ENCODE measurements at regions of chr11 and their contacts with region 1.

Region 1: DNA sequence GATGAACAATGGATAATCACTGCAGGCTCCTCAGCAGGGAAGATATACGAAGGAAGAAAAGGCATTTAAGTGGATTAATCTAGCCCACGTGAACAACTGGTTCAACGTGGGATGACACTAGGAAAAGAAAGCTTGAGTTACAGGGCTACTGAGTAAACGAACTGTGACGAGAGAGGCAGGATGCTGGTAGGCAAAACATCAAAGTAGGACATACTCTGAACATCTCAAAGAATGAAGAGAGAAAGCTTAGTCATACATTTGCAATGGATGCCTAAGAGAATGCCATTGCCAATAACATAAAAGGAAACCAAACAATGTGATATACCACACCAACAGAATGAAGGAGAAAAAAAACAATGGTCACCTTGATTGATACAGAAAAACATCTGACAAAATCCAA is 12.9 kb downstream of the USP28 start:
- DNase-seq: no peak
- ATAC-seq: no peak
- H3K4me3 ChIP-seq: no peak overlapping the region
- H3K4me3 Mint-ChIP-seq: peak overlapping the region in 2 of 10 donors; percentile 0 to 27
- H3K27ac ChIP-seq: no peak overlapping the region
- H3K27ac Mint-ChIP-seq: peak overlapping the region in 3 of 9 donors; percentile 2 to 74 (median 7)
- H3K4me1 ChIP-seq: peaks cover 0 to 25% of the 10 kb centered on the region in 2 donors
- H3K4me1 Mint-ChIP-seq: peaks cover 11 to 49% (median 22%) of the 10 kb centered on the region in 7 donors
- H3K27me3 ChIP-seq: no peaks in the 10 kb centered on the region
- H3K27me3 Mint-ChIP-seq: no peaks in the 10 kb centered on the region

Region 2: GRCh38 chr11:113814181-113814580 is 48.3 kb before region 1 on chr11:
- CTCF ChIA-PET with region 1: no interaction called
- POLR2A ChIA-PET with region 1: no interaction called
- intact Hi-C with region 1: loop called in 1 of 2 experiments (anchors 5 kb)
- DNase-seq: no peak
- ATAC-seq: no peak
- H3K4me3 ChIP-seq: no peak overlapping the region
- H3K4me3 Mint-ChIP-seq: no peak overlapping the region
- H3K27ac ChIP-seq: no peak overlapping the region
- H3K27ac Mint-ChIP-seq: peak overlapping the region in 1 of 9 donors; percentile 43
- H3K4me1 ChIP-seq: no peaks in the 10 kb centered on the region
- H3K4me1 Mint-ChIP-seq: peaks cover 0 to 3% (median 0%) of the 10 kb centered on the region in 7 donors
- H3K27me3 ChIP-seq: no peaks in the 10 kb centered on the region
- H3K27me3 Mint-ChIP-seq: no peaks in the 10 kb centered on the region

Region 3: DNA sequence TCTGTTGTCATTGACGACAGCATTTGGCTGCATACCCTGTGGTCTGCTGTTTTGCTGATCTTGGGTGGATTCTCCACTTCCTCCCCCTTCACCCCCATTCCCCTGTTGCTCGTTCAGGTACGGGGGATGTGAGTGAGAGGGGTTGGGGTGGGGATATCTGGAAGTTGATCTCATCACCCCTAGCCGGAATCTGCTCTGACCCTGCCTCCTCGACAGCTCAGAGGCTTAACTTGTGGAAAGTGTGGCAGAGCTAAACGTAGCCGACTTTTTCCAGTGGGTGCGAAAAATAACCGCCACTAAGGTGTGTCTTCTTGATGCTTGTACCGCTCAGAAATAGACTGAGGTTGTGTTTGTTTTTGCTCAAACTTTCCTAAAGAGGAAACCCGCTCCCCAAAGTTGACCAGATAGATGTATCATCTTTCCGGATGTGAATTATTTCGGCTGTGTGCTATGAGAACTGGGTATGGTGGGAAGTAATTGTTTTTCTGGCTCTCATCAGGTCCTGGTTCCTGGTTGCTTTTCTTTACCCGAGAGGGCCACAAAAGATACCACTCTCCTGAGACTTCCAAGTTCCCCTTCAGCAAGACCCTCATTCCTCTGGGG is 203.7 kb after region 1 on chr11:
- CTCF ChIA-PET with region 1: no interaction called
- POLR2A ChIA-PET with region 1: no interaction called
- intact Hi-C with region 1: no loop called
- DNase-seq: no peak
- ATAC-seq: peak; percentile 57
- H3K4me3 ChIP-seq: no peak overlapping the region
- H3K4me3 Mint-ChIP-seq: peak overlapping the region in 1 of 10 donors; percentile 34
- H3K27ac ChIP-seq: no peak overlapping the region
- H3K27ac Mint-ChIP-seq: peak overlapping the region in 3 of 9 donors; percentile 61 to 70 (median 63)
- H3K4me1 ChIP-seq: no peaks in the 10 kb centered on the region
- H3K4me1 Mint-ChIP-seq: peaks cover 0 to 14% (median 4%) of the 10 kb centered on the region in 7 donors
- H3K27me3 ChIP-seq: no peaks in the 10 kb centered on the region
- H3K27me3 Mint-ChIP-seq: peaks cover 0 to 28% (median 0%) of the 10 kb centered on the region in 5 donors